ENCODE measurements at regions of chr21 and their contacts with region 1.

Region 1: DNA sequence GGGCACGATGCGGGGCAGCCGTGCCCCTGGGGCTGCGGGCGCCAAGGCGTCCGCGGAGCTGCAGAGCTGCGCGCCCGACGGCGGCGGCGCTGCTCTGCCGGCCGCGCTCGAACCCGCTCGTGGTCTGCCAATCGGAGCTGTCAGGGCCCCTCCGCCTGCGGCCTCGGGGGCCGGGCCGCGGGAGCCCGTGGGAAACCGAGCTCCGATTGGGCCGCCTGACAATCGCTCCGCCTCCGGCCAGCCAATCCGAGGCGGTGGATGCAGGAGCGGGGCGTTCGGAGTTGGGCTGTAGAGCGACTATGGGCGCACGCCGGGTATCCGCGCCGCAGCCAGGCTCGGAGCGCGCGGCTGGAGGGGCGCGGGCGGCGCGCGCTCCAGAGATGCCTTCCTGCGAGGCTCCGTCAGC is 100.5 kb upstream of the SOD1 start:
- DNase-seq: peak; percentile 96
- ATAC-seq: peak; percentile 76
- H3K4me3 Mint-ChIP-seq: peak overlapping the region; percentile 92
- H3K27ac Mint-ChIP-seq: no peak overlapping the region
- H3K4me1 Mint-ChIP-seq: peaks cover 54% of the 10 kb centered on the region
- H3K27me3 Mint-ChIP-seq: peaks cover 21% of the 10 kb centered on the region
- CTCF ChIP-seq: no peak

Region 2: GRCh38 chr21:31158789-31159581 is 400.0 kb before region 1 on chr21:
- CTCF ChIA-PET with region 1: no interaction called
- POLR2A ChIA-PET with region 1: interaction called, 12 read pairs
- DNase-seq: no peak
- ATAC-seq: peak; percentile 33
- H3K4me3 Mint-ChIP-seq: peak overlapping the region; percentile 74
- H3K27ac Mint-ChIP-seq: peak overlapping the region; percentile 76
- H3K4me1 Mint-ChIP-seq: peaks cover 60% of the 10 kb centered on the region
- H3K27me3 Mint-ChIP-seq: no peaks in the 10 kb centered on the region
- CTCF ChIP-seq: no peak

Region 3: DNA sequence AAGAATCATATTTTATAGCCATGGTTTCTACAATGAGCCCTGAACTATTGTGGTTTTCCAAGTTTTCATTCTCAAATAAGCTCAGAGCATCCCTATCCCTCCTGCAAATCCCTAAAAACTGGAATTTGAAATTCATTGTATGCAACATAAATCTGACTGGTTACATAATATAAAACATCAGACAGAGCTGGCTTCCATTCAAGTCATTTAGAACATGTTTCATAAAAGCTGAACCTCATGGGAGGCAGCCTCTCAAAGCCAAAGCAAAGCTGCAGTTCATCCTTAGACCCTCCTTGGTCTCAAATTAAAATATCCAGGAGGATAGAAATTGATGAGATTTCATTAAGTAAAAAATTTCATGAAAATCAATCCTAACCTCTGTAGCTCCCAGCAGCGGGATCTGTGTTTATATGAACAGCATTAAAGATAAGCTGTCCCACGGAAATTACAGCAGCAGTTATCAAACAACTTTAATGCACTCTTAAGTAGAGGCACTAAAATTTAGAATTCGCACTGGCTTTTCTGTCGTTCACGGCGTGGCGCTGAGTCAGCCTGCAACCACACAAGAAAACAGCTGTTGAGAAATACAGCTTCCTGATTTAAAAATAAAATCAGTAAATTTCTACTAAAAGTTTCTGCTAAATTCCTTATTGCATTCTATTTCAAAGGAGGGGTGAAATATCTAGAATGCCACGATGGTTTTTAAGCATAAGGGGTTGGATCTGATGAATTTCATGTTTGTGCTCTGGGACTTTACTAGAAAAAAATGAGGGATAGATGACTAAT is 115.0 kb before region 1 on chr21:
- CTCF ChIA-PET with region 1: no interaction called
- POLR2A ChIA-PET with region 1: no interaction called
- DNase-seq: no peak
- ATAC-seq: no peak
- H3K4me3 Mint-ChIP-seq: no peak overlapping the region
- H3K27ac Mint-ChIP-seq: peak overlapping the region; percentile 19; the same call in 1 of the 2 replicates
- H3K4me1 Mint-ChIP-seq: peaks cover 15% of the 10 kb centered on the region
- H3K27me3 Mint-ChIP-seq: no peaks in the 10 kb centered on the region
- CTCF ChIP-seq: no peak

Region 4: GRCh38 chr21:31473685-31474345 is 85.2 kb before region 1 on chr21:
- CTCF ChIA-PET with region 1: no interaction called
- POLR2A ChIA-PET with region 1: interaction called, 10 read pairs
- DNase-seq: no peak
- ATAC-seq: no peak
- H3K4me3 Mint-ChIP-seq: no peak overlapping the region
- H3K27ac Mint-ChIP-seq: peak overlapping the region; percentile 66; the same call in 1 of the 2 replicates
- H3K4me1 Mint-ChIP-seq: peaks cover 34% of the 10 kb centered on the region
- H3K27me3 Mint-ChIP-seq: no peaks in the 10 kb centered on the region
- CTCF ChIP-seq: no peak

Region 5: DNA sequence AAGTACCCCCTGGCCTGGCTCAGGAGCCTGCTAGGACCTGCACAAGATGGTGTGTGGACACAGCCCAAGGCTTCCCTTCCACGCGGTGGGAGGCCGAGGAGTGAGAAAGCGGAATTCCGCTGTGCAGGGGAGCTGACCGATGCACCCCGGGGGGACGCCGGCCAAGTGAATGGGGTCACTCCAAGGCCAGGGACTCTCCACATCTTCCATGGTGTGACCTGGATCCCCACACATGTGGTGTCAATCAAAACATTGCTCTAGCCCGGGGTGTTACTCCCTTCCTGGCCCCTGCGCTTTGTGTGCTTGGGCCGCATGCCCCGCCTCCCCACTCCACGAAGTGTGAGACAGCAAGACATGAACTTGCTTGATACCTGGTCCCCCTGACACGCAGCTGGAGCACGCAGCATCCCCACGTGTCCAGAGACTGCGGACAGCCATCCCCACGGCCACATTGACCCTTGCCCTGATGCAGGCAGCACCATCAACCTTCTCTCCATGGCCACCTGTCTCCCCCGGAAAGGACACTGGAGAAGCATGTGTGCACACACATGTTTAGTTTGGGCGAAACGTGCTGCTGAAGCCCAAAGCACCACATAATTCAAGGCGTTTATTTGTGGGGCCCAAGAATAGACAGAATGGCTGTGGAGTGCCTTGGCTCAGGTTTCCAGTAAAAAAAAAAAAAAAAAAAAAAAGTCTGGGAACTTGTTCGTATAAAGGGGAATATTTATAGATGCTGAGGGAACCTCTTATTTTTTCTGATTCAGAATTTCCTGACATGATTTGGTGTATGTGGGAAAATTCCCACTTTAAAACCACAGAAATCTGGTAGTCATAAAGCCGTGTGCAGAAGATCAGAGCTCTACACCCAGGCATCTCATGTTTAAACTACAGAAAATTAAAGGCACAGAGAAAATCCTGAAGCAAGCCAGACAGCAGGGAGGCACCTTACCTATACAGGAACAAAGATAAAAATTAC is 485.5 kb after region 1 on chr21:
- CTCF ChIA-PET with region 1: no interaction called
- POLR2A ChIA-PET with region 1: no interaction called
- DNase-seq: no peak
- ATAC-seq: no peak
- H3K4me3 Mint-ChIP-seq: no peak overlapping the region
- H3K27ac Mint-ChIP-seq: no peak overlapping the region
- H3K4me1 Mint-ChIP-seq: peaks cover 12% of the 10 kb centered on the region
- H3K27me3 Mint-ChIP-seq: peaks cover 12% of the 10 kb centered on the region
- CTCF ChIP-seq: no peak